ENCODE measurements at regions of chr1 and their contacts with region 1.

Region 1: DNA sequence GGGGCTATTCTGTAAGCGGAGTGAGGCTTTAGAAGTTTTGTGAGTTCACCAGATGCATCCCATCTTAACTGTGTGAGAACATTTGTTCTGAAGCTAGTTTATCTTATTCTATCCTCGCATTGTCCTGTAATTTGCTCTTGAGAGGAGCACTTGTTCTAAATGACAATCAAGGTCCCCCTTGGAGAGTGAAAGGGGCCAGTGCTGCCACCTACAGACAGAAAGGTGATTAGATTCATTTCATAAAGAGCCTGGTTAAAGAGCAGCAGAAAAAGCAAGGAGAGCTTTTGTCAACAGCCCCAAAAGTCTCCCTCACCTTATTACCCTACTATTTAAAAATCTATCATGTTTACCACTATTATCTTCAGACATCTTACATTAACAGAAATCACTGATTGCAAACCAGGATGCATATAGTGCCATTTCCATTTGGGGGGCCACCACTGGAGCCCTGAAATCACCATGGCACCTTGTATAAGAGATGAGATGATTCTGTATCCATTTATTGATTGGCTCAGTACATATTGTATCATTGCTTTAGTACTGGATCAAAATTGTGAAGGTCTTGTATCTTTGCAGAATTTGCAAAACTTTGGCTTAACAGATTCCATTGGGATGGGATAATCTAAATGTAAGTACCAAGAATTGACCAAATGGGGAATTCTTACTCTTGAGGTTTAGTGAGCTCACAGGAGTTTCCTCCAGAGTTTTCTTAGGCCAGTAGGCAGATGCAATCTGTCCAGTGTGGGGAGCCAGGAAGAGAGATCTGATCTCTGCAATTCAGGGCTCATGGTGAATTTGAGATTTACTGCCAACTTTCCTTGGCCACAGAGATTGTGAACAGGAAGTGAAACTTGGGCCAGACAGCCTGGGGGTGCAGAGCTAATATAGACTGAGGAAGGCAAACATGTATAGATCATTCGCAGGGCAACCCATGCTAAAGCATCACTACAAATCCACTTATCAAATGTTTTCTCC is 64.3 kb upstream of the TRABD2B start:
- DNase-seq: peak; percentile 41
- ATAC-seq: peak; percentile 77

Region 2: GRCh38 chr1:47738560-47739182 is 322.8 kb before region 1 on chr1:
- intact Hi-C with region 1: loop called (anchors 5 kb)
- DNase-seq: peak; percentile 60
- ATAC-seq: peak; percentile 79

Region 3: DNA sequence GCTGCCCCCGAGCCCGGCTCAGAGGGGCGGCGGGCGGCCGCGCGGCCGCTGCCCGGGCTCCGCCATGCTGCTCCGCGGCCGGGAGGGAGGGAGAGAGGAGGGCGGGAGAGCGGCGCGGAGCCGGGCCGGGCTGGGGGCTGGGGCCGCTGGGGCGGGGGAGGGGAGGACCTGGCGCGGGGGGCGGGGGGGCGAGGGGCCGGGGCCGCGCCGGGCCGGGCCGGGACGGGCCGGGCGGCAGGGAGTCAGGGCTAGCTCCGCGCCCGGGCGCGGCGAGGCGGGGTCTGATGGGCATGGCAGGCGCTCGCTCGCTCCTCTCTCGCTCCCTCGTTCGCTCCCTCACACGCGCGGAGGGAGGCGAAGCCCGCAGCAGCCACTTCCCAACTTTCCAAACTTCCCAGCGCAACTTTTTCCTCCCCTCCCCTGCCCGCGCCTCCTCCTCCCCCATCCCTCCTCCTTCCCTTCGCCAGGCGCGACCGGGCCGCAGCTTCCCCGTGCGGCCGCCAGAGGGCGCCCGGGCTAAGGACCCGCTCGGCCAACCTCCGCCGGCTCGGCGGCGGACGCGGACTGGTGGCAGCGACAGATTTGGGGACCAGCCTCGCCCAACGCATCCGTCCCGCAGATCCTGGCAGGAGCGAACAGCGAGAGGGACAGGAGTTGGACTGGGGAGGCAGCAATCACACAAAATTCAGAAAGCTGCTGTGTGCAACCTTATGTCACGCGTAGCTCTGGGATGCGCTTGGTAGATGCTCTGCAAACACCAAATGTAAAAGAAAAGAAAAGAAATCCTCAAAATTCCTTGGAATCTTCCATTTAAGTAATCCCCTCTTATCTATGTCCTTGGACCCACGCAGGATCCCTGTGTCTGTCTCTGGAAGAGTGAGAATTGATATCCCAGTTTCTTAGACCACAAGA is 63.9 kb before region 1 on chr1 and contains the start of gene TRABD2B:
- intact Hi-C with region 1: loop called (anchors 10 kb)
- DNase-seq: peak; percentile 90
- ATAC-seq: peak; percentile 81
- total RNA-seq, gene TRABD2B: 0.92 TPM

Measured in left ventricle myocardium superior (tissue), 1 donor.